Colonic mucosa (tissue), 4 donors: ENCODE measurements at regions of chr13 and their contacts with region 1.

Region 1: GRCh38 chr13:32259116-32259515 is 56.0 kb downstream of the ZAR1L start:
- DNase-seq: no peak
- H3K4me3 ChIP-seq: no peak overlapping the region
- H3K27ac ChIP-seq: no peak overlapping the region
- H3K4me1 ChIP-seq: no peaks in the 10 kb centered on the region
- H3K27me3 ChIP-seq: no peaks in the 10 kb centered on the region
- CTCF ChIP-seq: no peak

Region 2: DNA sequence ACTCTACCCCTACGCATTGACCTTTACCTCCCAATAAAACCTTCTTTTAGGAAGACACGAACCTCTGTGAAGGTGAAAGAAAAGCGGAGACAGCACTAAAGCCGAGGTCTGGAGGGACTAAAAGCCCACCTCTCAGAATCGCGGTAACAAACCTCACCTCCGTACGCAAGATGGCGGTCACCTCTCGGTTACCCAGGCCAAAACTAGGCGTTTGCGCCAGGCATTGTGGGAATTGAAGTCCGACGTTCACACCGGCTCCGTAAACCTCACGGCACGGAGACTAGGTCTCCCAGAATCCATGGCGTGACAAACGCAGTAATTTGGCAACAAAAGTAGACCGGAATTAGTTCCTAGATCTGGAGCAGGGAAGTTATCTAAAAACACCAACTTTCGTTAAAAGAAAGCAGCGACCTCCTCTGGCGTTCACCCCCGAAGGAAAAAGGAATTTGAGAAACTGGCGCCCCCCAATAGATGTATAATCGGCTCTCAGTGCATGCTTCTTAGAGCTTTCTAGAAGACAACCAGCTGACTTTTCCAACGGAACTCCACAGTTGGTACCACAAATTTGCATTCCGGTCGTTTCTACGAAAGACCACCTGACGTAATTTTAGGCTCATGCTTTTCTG is 279.6 kb after region 1 on chr13 and contains the start of gene N4BP2L2:
- intact Hi-C with region 1: loop called (anchors 10 kb)
- DNase-seq: peak; percentile 96
- H3K4me3 ChIP-seq: peak within 1 kb of the TSS; percentile 75
- H3K27ac ChIP-seq: peak within 1 kb of the TSS; percentile 93
- H3K4me1 ChIP-seq: no peaks in the 10 kb centered on the region
- H3K27me3 ChIP-seq: no peaks in the 10 kb centered on the region
- CTCF ChIP-seq: no peak
- total RNA-seq, gene N4BP2L2: 59.6 to 82.3 TPM